ENCODE measurements at regions of chr5 and their contacts with region 1.

Region 1: GRCh38 chr5:150361301-150361700 is 3.8 kb downstream of the TCOF1 start:
- DNase-seq: no peak
- H3K4me3 Mint-ChIP-seq: no peak overlapping the region
- H3K27ac Mint-ChIP-seq: no peak overlapping the region
- H3K4me1 Mint-ChIP-seq: peaks cover 40% of the 10 kb centered on the region
- H3K27me3 Mint-ChIP-seq: no peaks in the 10 kb centered on the region

Region 2: DNA sequence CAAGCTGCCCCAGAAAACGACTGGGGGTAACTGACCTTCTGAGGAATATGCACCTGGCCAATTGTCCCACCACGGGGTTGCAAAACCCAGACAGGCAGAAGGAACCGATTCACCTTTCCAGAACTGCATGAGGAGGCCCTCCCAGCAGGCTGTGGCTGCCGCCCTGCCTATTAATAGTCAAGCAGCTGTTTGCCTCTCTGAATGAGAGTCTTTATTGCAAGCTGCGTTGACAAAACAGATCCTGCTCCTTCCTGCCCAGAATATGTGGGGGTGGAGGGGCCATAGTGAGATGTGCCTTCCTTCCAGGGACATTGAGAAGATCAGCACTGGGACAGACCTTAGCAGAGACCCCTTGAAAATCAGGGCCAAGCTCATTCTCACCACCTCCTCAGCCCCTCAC is 22.1 kb before region 1 on chr5:
- CTCF ChIA-PET with region 1: no interaction called
- DNase-seq: no peak
- H3K4me3 Mint-ChIP-seq: no peak overlapping the region
- H3K27ac Mint-ChIP-seq: no peak overlapping the region
- H3K4me1 Mint-ChIP-seq: peaks cover 13% of the 10 kb centered on the region
- H3K27me3 Mint-ChIP-seq: peaks cover 15% of the 10 kb centered on the region

Region 3: GRCh38 chr5:150350524-150351344 is 10.6 kb before region 1 on chr5:
- CTCF ChIA-PET with region 1: interaction called, 17 read pairs
- DNase-seq: peak; percentile 69
- H3K4me3 Mint-ChIP-seq: no peak overlapping the region
- H3K27ac Mint-ChIP-seq: peak overlapping the region; percentile 22
- H3K4me1 Mint-ChIP-seq: peaks cover 13% of the 10 kb centered on the region
- H3K27me3 Mint-ChIP-seq: peaks cover 26% of the 10 kb centered on the region

Region 4: GRCh38 chr5:150438873-150439546 is 77.7 kb after region 1 on chr5:
- CTCF ChIA-PET with region 1: no interaction called
- DNase-seq: no peak
- H3K4me3 Mint-ChIP-seq: no peak overlapping the region
- H3K27ac Mint-ChIP-seq: no peak overlapping the region
- H3K4me1 Mint-ChIP-seq: peaks cover 15% of the 10 kb centered on the region
- H3K27me3 Mint-ChIP-seq: peaks cover 11% of the 10 kb centered on the region